ENCODE measurements at regions of chr10 and their contacts with region 1.

Region 1: DNA sequence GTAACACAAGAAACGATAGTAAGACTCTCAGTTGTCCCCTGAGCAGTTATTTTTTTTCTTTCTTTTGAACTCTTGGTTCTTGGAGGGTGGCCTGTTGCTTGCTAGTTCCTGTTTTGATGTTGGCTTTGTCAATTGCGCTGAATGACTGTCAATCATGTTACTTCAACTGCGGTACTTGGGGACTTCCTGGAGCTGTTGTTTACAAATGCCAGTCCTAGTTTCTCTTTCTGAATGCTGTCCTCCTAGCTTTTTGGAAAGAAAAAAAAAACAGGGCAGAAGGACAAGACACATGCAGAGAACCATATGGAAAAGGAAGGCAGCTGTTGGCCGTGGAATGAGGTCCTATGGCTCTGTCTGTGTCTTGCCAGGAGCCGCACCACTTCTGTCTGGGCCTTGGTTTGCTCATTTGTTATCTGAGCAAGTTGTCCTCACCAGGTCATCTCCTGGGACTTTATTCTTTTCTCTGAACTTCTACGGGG is 7.0 kb upstream of the PDCD4 start:
- DNase-seq: no peak

Region 2: DNA sequence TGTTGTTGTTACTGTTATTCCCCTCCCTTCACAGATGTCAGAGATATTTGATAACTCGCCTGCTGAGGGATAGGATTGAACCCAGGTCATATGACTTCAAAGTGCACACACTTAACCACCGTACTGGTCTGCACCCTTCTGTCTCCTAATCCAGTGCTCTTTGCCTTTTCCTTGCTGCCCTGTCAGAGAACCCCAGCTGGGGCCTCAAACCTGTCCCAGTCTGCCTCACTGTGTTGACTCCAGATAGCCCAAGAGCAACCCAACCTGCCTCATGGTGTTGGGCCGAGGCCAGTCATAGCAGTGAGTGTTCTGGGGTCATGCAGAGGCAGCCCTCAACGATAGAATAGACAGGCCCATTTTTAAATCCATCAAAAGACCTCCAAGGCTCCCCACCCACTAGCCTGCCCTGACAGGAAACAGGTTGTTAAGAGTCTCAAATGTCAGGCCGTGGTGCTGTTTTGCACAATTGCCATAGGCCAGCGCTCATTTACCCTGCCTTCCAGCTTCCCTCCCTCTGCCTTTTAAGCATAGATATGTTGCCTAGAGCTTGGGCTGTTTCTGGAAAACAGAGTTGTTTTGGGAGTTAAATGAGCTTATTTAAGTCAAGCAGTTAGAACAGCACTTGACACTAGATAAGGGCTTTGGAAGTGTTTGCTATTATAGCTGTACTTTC is 29.9 kb before region 1 on chr10:
- intact Hi-C with region 1: loop called in 1 of 2 experiments (anchors 5 kb)
- DNase-seq: no peak

Region 3: DNA sequence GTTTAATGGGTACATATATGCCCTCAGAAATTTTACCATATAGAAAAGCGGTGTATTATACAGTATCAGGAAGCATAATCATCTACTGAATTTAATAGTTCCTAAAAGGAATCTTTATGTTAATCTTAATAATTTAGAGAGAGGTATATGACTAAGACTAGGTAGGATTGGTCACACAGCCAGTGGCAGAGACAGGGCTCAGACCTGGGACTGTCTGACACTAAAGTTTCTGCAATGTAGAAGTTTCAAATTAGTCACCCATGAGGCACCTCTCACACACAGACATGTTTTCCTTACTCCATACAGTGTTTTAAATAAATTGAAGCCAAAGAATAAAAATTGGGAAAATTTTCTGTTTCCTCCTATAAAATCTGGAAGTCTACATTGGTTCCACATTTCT is 139.3 kb after region 1 on chr10:
- intact Hi-C with region 1: no loop called
- DNase-seq: no peak

Measured in posterior vena cava (tissue), 2 donors.